ENCODE measurements at regions of chr5 and their contacts with region 1.

Region 1: DNA sequence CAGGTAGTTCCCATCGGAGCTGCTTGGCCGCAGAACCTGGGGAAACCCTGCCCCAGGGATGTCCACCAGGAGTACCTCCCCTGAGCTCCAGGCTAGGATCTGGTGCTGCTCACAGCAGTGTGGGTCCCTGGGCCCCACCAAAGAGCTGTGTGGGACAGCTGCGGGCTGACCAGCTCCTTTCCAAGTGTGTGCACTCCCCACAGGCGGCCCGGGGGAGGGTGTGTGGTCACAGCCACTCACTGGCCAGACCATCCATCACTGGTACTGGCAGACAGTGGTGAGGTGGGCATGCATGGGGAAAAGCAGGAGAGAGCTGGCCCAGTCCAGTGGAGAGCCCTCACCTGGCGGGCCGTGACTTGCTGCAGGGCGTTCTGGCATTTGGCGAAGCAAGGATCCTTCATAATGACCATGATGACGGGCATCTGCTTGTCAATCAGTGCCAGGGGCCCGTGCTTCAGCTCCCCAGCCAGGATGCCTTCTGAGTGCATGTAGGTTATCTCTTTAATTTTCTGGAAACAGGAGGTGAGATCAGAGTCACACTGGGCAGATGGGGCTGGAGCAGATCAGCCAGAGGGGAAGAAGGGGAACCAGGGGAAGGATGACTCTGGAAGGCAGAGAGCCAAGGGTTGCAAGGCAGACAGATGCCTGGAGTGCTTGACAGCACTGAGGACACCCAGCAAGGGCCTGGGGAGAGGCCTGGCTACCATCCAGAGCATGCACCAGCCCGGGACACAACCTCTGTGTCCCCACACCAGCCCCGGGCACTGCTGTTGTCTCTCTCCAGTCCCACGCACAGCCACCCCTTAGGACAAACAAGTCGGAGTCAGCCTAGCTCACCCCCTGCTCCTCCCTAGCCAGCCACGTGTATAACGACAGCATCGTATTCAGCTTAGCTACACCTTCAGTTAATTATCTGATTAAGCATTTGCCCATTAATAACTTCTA is 12.8 kb upstream of the MAPK9 start:
- DNase-seq: no peak
- CTCF ChIP-seq: no peak

Region 2: GRCh38 chr5:180315762-180316212 is 11.1 kb after region 1 on chr5:
- CTCF ChIA-PET with region 1: interaction called, 29 read pairs
- POLR2A ChIA-PET with region 1: no interaction called
- DNase-seq: peak; percentile 80
- CTCF ChIP-seq: peak; percentile 70

Region 3: DNA sequence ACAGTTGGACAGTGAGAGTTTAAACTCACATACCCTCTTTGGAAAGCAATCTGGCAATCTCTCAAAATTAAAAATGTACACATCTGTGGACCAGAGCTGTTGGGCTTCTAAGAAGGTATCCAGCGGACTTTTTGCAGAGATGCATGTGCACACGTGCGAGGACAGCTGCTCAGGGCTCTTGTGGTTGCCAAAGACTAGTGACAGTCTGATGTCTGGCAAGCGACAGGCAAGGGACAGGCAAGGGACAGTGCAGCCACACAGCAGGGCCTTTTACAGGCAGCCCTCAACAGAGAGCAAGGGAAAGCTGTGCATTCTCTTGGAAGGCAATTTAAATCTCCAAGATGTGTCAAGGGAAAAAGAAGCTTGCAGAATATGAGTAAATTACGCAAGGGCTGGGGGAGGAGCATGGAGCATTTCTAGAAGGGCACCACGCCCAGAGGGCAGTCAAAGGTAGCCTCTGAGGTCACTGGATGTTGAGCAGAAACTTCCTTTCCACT is 39.2 kb after region 1 on chr5:
- CTCF ChIA-PET with region 1: no interaction called
- POLR2A ChIA-PET with region 1: no interaction called
- DNase-seq: no peak
- CTCF ChIP-seq: no peak

Region 4: DNA sequence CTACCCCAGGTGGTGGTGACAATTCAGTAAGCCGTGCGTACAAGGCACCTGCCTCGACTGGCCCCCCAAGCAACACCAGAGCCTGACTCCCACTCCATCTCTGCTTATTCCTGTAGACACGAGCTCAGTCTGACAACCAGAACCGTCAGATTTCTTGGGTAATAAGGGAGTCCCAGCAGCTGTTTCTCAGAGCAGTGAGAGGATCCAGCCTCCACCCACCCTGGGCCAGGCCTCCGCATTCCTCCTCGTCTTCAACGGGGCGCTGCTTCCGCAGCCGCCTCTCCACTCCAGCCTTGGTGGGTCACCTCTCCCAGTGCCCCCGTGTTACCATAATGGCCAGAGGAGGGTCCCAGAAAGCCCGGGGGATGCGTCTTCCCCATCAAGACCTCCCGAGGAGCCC is 76.2 kb after region 1 on chr5:
- CTCF ChIA-PET with region 1: no interaction called
- POLR2A ChIA-PET with region 1: no interaction called
- DNase-seq: no peak
- CTCF ChIP-seq: no peak

Measured in GM10248 (cell line).